Right ventricle myocardium inferior (tissue), 1 donor: ENCODE measurements at regions of chr1 and their contacts with region 1.

Region 1: DNA sequence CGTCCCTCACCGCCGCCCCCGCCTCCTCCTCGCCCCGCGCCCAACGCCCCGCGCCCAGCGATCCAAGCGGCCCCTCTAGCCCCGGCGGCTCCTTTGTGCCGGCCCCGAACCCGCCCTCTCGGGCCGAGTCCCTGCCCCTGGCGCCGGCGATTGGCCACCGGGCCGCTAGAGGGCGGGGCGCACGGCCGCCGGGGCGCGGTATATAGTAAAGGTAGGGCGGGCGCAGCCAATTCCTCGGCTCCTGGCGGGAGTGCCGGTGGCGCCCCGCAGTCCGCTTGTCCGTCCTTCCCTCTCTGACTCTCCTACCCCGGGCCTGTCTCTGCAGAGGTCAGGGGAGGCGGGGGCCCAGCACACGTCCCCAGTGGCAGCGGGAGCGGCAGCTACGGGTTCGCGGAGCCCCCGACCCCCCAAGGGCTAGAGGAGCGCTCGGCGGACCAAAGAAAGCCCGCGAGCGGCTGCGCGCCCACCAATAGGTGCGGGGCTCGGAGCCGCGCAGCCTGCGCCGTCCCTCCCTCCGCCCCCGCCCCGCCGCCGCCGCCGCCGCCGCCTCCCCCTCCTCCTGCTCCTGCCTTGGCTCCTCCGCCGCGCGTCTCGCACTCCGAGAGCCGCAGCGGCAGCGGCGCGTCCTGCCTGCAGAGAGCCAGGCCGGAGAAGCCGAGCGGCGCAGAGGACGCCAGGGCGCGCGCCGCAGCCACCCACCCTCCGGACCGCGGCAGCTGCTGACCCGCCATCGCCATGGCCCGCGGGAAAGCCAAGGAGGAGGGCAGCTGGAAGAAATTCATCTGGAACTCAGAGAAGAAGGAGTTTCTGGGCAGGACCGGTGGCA is at the start of gene ATP1B1:
- DNase-seq: peak; percentile 94
- ATAC-seq: peak; percentile 88
- total RNA-seq, gene ATP1B1: 335 TPM

Region 2: DNA sequence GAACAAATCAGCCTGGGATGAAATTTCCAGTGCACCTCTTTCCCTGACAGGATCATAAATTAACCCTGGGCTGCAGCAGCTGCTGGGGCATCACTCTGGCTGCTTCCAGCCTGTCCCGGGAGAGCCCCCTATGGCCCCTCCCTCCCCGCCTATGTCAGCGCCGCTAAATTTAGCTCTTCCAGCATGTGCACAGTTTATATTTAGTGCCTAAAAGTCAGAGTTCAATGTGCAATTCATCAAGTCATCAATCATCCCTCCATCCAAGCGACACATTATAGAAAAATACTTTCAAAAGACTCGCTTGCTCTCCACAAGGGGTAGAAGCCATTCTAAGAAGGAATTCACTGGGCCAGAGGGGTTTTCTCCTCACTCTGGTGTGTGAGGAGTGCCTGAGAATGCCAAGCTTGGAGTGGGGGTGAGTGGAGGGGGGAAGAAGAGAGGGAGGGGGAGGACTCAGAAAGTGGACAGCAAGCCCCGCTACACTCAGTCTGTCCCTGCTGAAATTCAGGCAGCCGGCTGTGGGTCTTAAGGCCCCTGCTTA is 492.5 kb before region 1 on chr1:
- intact Hi-C with region 1: loop called (anchors 5 kb)
- DNase-seq: no peak
- ATAC-seq: peak; percentile 86

Region 3: DNA sequence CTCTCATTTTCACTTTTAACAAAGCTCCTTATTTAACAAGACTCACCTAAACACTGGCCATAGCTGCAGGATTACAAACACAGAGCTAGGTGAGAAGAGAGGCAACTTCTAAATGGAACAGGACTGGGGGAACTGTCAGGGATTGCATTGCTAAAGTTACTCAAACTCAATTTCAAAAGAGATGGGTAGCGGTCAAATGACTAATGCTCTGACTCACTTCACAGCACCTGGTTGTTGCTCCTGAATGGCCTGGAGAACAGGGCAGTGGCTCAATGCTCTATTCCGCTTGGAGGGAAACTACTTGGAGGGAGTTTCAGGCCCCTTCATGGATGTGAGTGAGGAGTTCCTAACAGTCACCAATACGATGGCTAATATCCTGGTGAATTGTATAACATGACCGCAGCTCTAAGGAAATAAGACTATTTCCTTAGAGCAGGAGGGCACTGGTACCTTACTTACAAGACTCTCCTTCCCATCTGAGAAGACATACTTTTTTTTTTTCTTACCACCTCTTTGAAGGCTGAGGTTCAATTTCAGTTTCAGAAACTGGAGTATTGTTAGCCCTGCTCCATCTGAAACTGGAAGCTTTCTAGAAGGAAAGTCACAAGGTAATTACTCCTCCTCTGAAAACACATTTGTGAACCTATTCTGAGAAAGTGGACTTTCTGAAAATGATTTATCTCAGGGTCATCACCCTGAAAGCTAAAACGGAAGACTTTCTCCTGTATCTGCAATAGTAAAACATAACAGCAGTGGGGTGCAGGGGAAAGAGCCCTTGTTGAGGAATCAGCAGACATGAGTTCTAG is 386.8 kb before region 1 on chr1:
- intact Hi-C with region 1: loop called (anchors 5 kb)
- DNase-seq: no peak
- ATAC-seq: no peak

Region 4: DNA sequence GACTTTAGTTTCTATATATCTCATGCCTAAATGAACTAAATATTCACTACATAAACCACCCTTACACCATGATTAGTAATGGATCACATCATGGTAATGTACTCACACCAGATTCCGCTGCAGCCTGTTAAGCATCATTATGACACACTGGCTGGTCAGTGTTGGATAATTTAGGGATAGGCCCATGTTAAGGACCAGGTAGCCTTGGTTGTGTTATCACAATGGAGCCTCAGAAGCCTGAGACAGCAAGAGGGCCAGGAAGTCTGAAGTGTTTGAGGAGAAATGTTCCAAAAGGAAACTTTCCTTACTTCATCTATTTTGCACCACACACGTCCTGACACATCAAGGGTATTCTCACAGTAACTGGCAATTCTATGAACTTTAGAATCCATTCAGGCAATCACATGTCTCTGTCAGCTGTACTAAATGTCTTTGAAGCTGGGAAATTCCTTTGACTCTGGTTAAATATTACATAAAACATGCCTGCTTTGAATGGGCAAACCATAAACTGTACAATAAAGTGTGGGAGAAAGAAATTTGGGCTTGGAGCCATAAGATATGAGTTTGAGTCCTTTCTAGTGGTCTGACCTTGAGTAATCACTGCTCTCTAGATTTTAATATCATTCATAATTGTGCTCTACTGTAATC is 272.0 kb before region 1 on chr1:
- intact Hi-C with region 1: loop called (anchors 5 kb)
- DNase-seq: no peak
- ATAC-seq: peak; percentile 59

Region 5: DNA sequence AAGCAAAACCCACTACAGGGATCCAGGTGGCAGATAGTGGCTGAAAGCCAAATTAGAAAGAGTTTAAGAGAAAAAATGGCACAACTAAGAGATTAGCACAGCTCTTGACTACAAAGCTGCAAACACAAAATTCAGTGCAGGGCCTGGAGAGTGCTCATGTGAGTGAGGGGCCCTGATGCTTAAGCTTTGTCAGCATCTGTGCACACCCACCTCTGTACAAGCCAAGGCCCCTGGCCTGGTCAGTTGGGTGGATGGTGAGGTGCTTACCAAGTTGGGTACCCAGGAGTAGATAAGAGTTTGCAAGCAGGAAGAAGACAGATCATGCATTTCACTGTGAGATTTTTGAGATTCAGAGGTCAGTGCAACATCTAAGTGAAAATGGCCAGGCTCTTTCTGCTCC is 62.5 kb before region 1 on chr1:
- intact Hi-C with region 1: loop called (anchors 2 kb)
- DNase-seq: no peak
- ATAC-seq: no peak

Region 6: GRCh38 chr1:169119405-169119804 is 13.1 kb after region 1 on chr1:
- intact Hi-C with region 1: no loop called
- DNase-seq: no peak
- ATAC-seq: no peak